ENCODE measurements at regions of chr15 and their contacts with region 1.

Region 1: GRCh38 chr15:52780172-52780980 is 9.8 kb downstream of the ONECUT1 start:
- ATAC-seq: peak; percentile 21 to 87 (median 52)
- H3K4me3 ChIP-seq: peak overlapping the region; percentile 6 to 75 (median 13)
- H3K27ac ChIP-seq: peak overlapping the region; percentile 22 to 65
- H3K4me1 ChIP-seq: peaks cover 18 to 45% of the 10 kb centered on the region in 2 donors

Region 2: GRCh38 chr15:53197426-53197839 is 417.1 kb after region 1 on chr15:
- in situ Hi-C with region 1: loop called in 4 of 9 experiments (anchors 25 kb)
- ATAC-seq: peak; percentile 79 to 96 (median 92)
- H3K4me3 ChIP-seq: peak overlapping the region; percentile 13 to 38 (median 23)
- H3K27ac ChIP-seq: no peak overlapping the region
- H3K4me1 ChIP-seq: peaks cover 9 to 31% of the 10 kb centered on the region in 2 donors

Region 3: GRCh38 chr15:53203454-53203853 is 423.1 kb after region 1 on chr15:
- in situ Hi-C with region 1: loop called in 4 of 9 experiments (anchors 25 kb)
- ATAC-seq: no peak
- H3K4me3 ChIP-seq: no peak overlapping the region
- H3K27ac ChIP-seq: no peak overlapping the region
- H3K4me1 ChIP-seq: peaks cover 5 to 18% of the 10 kb centered on the region in 2 donors

Region 4: DNA sequence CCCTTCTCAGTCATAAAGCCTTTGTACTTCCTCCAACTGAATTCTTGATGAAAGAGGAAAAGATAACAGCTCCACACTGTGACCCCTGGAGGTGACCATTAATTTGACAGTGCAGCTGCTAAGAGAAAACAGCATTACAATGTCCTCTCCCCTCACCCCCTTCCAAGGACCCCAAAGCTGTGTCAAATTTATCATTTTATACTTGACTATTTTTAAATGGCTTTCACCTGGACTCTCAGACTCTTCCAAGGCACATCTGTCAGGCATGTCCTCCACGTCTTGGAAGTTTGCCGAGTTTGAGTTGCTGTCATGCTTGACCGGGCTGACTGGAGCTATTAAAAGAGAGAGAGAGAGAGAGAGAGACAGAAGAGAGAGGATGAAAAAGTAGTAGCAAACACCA is 742.6 kb after region 1 on chr15:
- in situ Hi-C with region 1: loop called in 2 of 9 experiments (anchors 25 kb)
- ATAC-seq: peak in 5 of 8 experiments; percentile 31 to 52 (median 41)
- H3K4me3 ChIP-seq: no peak overlapping the region
- H3K27ac ChIP-seq: no peak overlapping the region
- H3K4me1 ChIP-seq: peaks cover 21 to 60% of the 10 kb centered on the region in 2 donors

Region 5: DNA sequence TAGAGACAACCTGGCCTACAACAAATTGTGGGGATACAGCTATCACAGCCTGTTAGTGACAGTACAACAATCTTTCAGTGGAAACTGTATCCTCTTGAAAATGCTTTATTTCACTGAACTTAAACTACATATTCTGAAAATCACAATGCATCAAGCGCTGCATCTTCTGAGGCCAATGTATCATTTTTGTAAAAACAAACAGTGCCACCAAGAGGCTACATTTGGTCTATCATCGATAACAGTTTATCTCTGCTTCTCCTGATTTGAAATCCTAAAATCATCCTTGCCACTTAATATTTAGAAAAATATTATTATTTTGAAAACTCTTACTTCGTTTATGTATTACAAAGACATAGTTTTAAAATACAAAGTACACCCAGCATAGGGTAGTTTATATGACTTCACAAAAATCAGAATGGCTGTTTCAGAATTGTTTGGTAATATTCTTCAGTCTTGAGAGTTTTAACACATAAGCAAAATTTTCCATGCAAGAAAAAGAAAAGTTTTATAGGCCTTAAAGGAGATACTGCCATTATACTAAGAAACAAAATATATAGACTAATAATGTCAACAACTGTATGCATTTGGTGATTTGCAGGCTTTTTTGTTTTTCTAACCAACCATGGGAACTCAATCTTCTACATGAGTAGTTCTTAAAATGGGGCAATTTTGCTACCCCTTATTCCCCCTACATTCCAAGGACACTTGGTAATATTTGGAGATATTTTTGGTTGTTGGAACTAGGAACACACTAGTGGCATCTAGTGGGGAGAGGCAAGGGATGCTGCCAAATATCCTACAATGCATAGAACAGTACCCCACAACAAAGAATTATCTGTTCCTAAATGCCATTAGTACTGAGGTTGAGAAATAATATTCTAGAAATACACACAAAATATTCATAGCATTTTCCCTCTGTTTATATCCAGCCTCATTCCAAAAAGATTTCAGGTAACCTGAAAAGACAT is 936.8 kb after region 1 on chr15:
- in situ Hi-C with region 1: loop called in 3 of 9 experiments (anchors 25 kb)
- ATAC-seq: peak in 5 of 8 experiments; percentile 43 to 70 (median 56)
- H3K4me3 ChIP-seq: no peak overlapping the region
- H3K27ac ChIP-seq: no peak overlapping the region
- H3K4me1 ChIP-seq: peaks cover 0 to 8% of the 10 kb centered on the region in 2 donors

Measured in motor neuron (in vitro differentiated cells).